HEK293T (cell line): ENCODE measurements at regions of chr5 and their contacts with region 1.

Region 1: GRCh38 chr5:69083412-69083811 is 10.4 kb upstream of the SLC30A5 start:
- DNase-seq: no peak

Region 2: GRCh38 chr5:69093771-69094482 is 10.5 kb after region 1 on chr5 and contains the start of gene SLC30A5:
- CTCF ChIA-PET with region 1: interaction called, 19 read pairs
- POLR2A ChIA-PET with region 1: interaction called, 6 read pairs
- DNase-seq: peak; percentile 99